Activated T-helper 1 cell treated with anti-CD3 and anti-CD28 coated beads, Interleukin-12 subunit alpha, Interleukin-12 subunit beta, Interleukin-2, Interleukin-4 antibody, amounts not matched to agents 30 ng/mL and 10 ng/mL and 1 ng/mL, durations not matched to agents 14 hours and 24 hours and 36 hours (primary cell): ENCODE measurements at regions of chr5 and their contacts with region 1.

Region 1: GRCh38 chr5:124583469-124584350 is 162.7 kb downstream of the ZNF608 start:
- DNase-seq: peak; percentile 1
- H3K4me3 Mint-ChIP-seq: no peak overlapping the region
- H3K27ac Mint-ChIP-seq: no peak overlapping the region
- H3K4me1 Mint-ChIP-seq: peaks cover 14% of the 10 kb centered on the region
- H3K27me3 Mint-ChIP-seq: no peaks in the 10 kb centered on the region

Region 2: DNA sequence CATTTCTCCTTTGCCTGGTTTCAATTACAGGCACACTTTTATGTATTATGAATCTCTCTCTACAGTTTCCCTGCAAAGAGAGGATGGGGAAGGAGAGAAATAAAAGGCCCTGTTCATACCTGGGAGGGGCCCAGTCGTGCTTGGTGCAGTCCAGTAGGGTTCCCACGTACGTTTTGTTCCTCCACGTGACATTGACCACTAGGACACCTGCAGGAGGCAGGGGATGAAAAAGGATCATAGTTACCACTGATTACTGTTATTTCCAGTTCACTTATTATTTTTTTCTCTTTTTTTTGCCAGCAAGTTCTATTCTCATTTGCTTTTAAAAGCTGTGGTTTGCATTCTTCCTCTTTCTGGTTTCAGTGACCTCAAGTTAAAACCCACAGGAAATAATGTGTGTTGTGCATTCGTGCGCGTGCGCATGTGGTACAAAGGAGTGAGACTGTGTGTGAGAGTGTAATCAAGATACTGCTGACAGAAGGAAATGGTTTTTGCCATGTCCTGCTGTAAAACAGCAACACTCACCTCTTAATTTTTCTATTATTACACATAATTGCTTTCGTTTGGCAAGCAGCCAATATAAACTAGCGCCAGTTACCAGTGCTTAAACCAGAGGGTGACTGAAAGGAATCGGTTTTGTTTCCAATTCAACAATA is 65.9 kb after region 1 on chr5:
- intact Hi-C with region 1: loop called (anchors 5 kb)
- DNase-seq: peak; percentile 68
- H3K4me3 Mint-ChIP-seq: peak overlapping the region; percentile 34
- H3K27ac Mint-ChIP-seq: peak overlapping the region; percentile 85
- H3K4me1 Mint-ChIP-seq: peaks cover 20% of the 10 kb centered on the region
- H3K27me3 Mint-ChIP-seq: peaks cover 40% of the 10 kb centered on the region

Region 3: DNA sequence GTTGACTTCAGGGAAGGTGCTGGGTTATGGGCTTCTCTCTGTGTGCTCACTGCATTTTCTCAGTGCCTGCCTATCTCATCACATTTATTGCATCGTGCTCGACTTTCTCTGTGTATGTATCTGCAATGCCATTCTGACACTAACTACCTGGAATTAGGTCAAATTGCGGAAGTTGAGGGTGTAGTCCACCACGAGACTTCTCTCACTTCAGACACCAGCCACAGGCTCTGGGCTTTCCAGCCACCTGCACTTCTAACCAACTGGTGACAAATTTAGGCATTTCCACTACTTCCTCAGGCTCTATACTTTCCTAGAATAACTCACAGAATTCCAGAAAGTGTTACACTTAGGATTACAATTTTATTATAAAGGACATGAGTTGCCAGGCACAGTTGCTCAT is 351.4 kb after region 1 on chr5:
- intact Hi-C with region 1: loop called (anchors 5 kb)
- DNase-seq: peak; percentile 34
- H3K4me3 Mint-ChIP-seq: no peak overlapping the region
- H3K27ac Mint-ChIP-seq: peak overlapping the region; percentile 47
- H3K4me1 Mint-ChIP-seq: peaks cover 9% of the 10 kb centered on the region
- H3K27me3 Mint-ChIP-seq: no peaks in the 10 kb centered on the region